WTC11 (cell line): ENCODE measurements at regions of chr11 and their contacts with region 1.

Region 1: DNA sequence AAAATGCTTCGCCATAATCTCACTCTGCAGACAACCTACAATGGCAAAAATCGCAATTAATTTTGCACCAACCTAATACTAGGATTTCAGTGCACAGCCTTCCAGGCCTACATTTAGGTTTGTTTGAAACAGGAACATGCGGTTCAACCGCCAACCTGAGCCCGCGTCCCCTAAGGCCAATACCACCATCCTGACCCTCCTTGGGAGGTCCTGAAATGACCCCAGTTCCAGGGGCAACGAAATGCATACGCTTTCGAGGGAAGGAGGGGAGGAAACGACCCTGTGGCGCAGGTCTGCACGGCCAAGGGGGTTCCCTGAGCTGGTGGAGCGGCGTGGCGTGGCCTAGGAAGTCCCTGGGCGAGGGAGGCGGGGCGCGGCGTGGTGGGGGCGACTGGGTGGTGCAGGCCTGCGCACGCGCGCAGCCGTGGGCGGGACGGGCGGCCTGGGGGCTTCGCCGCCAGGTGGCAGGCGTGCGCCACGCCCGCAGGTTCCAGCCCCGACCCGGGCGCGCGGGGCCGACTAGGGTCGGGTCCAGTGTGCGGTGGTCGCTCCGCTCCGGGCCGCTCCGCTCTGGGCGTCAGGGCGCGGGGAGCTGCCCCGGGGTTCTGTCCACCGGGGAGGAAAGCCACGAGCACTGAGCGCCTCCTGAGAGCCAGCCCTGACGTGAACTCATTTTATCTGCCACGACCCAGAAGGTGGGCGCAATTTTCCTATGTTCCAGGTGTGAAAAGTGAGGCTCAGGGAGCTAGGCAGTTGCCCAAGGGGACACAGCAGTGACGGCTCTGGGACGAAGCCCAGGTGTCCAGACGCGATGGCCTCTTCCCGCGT is 94.1 kb downstream of the SWAP70 start:
- DNase-seq: peak; percentile 79
- ATAC-seq: peak; percentile 75
- H3K4me3 Mint-ChIP-seq: peak overlapping the region; percentile 66
- H3K27ac Mint-ChIP-seq: peak overlapping the region; percentile 41; the same call in 1 of the 2 replicates
- H3K4me1 Mint-ChIP-seq: peaks cover 43% of the 10 kb centered on the region
- H3K27me3 Mint-ChIP-seq: 0 out of 2 replicates have a peak, but pooled peaks cover 3% of the 10 kb centered on the region
- CTCF ChIP-seq: peak; percentile 84

Region 2: GRCh38 chr11:9606809-9607510 is 151.1 kb before region 1 on chr11:
- CTCF ChIA-PET with region 1: interaction called, 14 read pairs
- POLR2A ChIA-PET with region 1: no interaction called
- DNase-seq: peak; percentile 53
- ATAC-seq: peak; percentile 92
- H3K4me3 Mint-ChIP-seq: no peak overlapping the region
- H3K27ac Mint-ChIP-seq: 0 out of 2 replicates have a peak overlapping the region, but pooled peaks have one; percentile 6
- H3K4me1 Mint-ChIP-seq: peaks cover 32% of the 10 kb centered on the region
- H3K27me3 Mint-ChIP-seq: no peaks in the 10 kb centered on the region
- CTCF ChIP-seq: no peak

Region 3: GRCh38 chr11:9700105-9700801 is 57.8 kb before region 1 on chr11:
- CTCF ChIA-PET with region 1: no interaction called
- POLR2A ChIA-PET with region 1: no interaction called
- DNase-seq: no peak
- ATAC-seq: no peak
- H3K4me3 Mint-ChIP-seq: no peak overlapping the region
- H3K27ac Mint-ChIP-seq: peak overlapping the region; percentile 2; the same call in 1 of the 2 replicates
- H3K4me1 Mint-ChIP-seq: peaks cover 14% of the 10 kb centered on the region
- H3K27me3 Mint-ChIP-seq: no peaks in the 10 kb centered on the region
- CTCF ChIP-seq: no peak

Region 4: DNA sequence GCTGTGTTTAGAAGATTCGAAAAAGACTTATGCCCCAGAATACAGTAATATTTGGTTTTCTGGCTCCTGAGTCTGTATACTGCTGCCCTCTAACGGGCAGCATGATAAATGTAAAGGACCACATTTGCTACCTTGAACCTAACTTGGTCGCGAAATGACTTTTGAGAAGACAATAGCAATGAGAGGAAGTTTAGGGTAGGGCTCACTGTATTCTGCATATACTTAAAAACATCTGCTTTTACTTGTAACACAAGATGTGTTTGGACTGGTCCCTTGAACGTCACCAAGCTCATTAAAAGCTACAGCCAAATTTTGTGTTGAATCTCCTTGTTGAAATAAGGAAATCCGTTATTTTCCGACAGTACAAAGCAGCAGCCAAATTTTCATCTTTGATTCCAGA is 215.0 kb after region 1 on chr11:
- CTCF ChIA-PET with region 1: interaction called, 13 read pairs
- POLR2A ChIA-PET with region 1: no interaction called
- DNase-seq: no peak
- ATAC-seq: peak; percentile 71
- H3K4me3 Mint-ChIP-seq: no peak overlapping the region
- H3K27ac Mint-ChIP-seq: no peak overlapping the region
- H3K4me1 Mint-ChIP-seq: peaks cover 28% of the 10 kb centered on the region
- H3K27me3 Mint-ChIP-seq: no peaks in the 10 kb centered on the region
- CTCF ChIP-seq: peak; percentile 40

Region 5: DNA sequence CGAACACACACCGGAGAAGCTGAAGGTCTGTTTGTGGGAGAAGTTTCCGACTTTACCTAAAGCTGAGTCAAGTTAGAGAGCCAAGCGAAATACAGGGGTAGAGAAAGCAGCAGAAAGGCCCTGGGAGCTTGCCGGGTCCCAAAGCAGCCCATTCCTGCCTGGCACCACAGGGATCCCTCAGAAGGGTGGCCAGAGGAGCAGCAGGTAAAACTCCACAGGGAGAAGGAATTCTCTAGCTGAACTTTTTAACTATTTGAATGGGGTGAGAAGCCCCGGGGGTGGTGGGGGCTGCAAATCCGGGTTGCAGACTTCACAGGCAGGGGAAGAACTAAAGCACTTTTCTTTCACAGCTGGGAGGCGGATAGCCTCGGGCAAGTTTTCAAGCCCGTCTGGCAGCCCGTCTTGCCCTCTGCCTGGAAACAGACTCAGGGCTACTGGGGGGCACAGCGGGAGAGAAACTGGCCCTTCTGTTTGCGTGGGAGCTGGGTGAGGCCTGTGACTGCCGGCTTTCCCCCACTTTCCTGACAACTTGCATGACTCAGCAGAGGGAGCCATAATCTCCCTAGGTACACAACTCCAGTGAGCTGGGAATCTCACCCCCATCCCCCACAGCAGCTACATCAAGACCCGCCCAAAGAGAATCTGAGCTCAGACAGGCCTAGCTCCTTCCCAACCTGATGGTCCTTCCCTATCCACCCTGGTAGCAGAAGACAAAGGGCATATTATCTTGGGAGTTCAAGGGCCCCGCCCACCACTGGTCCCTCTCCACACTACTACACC is 225.0 kb after region 1 on chr11:
- CTCF ChIA-PET with region 1: interaction called, 11 read pairs
- POLR2A ChIA-PET with region 1: no interaction called
- DNase-seq: peak; percentile 48
- ATAC-seq: peak; percentile 94
- H3K4me3 Mint-ChIP-seq: no peak overlapping the region
- H3K27ac Mint-ChIP-seq: peak overlapping the region; percentile 89
- H3K4me1 Mint-ChIP-seq: peaks cover 34% of the 10 kb centered on the region
- H3K27me3 Mint-ChIP-seq: no peaks in the 10 kb centered on the region; the same call in 1 of the 2 replicates
- CTCF ChIP-seq: no peak